Activated CD4-positive, alpha-beta T cell treated with anti-CD3 and anti-CD28 coated beads, Interleukin-2, amount 10 ng/mL, durations not matched to agents 24 days and 14 days (primary cell): ENCODE measurements at regions of chr2 and their contacts with region 1.

Region 1: GRCh38 chr2:112749755-112750559 is 14.5 kb downstream of the CKAP2L start:
- DNase-seq: peak; percentile 95
- H3K4me3 Mint-ChIP-seq: peak overlapping the region; percentile 55
- H3K27ac Mint-ChIP-seq: peak overlapping the region; percentile 83
- H3K4me1 Mint-ChIP-seq: peaks cover 34% of the 10 kb centered on the region
- H3K27me3 Mint-ChIP-seq: no peaks in the 10 kb centered on the region

Region 2: GRCh38 chr2:112648081-112648480 is 101.9 kb before region 1 on chr2:
- intact Hi-C with region 1: no loop called
- DNase-seq: no peak
- H3K4me3 Mint-ChIP-seq: peak overlapping the region; percentile 100
- H3K27ac Mint-ChIP-seq: no peak overlapping the region
- H3K4me1 Mint-ChIP-seq: peaks cover 66% of the 10 kb centered on the region
- H3K27me3 Mint-ChIP-seq: no peaks in the 10 kb centered on the region

Region 3: DNA sequence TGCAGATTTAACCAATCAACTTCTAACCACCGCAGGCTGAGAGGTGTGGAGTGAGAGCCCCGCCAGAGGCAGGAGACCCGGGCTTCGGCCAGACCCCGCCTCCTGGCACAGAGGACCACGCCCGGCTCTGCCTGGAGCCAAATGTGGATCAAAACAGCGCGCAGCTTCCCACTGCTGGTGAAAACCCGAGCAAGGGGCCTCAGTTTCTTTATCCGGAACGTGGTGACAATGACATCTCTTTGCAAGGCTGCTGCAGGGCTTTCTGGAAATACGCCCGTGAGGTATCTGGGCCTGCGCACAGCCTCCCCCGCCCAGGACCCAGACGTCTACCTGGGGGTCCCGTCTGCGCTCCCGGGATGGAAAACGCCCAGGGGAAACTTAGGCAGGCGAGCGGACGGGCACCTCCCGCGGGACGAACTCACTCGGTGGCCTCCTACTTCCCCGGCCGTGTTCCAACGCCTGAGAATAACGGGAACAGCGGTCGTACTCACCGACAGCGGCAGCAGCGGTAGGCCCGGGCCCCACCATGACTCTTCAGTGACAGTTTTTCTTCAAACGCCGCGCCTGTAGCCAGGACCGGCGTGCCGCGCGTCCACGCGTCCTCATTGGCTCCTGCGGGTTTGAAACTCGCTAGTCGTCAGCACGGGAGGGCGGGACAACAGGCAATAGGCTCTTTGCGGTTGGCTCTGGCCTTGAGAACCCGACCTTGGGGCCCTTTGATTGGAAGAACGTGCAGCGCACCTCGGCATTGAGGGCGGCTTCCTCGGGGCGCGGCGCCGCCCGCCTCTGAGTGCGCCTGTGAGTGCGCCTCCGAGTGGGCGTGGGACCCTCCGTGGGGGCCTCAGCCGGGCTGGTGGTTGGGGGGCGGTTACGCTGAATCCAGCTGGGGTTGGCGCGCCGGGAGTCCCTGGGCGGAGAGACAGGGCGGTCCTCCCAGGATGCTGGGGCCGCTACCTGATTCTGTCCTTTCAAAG is 14.4 kb after region 1 on chr2 and contains the start of gene CKAP2L:
- intact Hi-C with region 1: loop called (anchors 1 kb)
- DNase-seq: peak; percentile 99
- H3K4me3 Mint-ChIP-seq: peak within 1 kb of the TSS; percentile 92
- H3K27ac Mint-ChIP-seq: peak within 1 kb of the TSS; percentile 93
- H3K4me1 Mint-ChIP-seq: peaks cover 47% of the 10 kb centered on the region
- H3K27me3 Mint-ChIP-seq: no peaks in the 10 kb centered on the region
- total RNA-seq, gene CKAP2L: 17.8 and 17.9 TPM in 2 replicates

Region 4: DNA sequence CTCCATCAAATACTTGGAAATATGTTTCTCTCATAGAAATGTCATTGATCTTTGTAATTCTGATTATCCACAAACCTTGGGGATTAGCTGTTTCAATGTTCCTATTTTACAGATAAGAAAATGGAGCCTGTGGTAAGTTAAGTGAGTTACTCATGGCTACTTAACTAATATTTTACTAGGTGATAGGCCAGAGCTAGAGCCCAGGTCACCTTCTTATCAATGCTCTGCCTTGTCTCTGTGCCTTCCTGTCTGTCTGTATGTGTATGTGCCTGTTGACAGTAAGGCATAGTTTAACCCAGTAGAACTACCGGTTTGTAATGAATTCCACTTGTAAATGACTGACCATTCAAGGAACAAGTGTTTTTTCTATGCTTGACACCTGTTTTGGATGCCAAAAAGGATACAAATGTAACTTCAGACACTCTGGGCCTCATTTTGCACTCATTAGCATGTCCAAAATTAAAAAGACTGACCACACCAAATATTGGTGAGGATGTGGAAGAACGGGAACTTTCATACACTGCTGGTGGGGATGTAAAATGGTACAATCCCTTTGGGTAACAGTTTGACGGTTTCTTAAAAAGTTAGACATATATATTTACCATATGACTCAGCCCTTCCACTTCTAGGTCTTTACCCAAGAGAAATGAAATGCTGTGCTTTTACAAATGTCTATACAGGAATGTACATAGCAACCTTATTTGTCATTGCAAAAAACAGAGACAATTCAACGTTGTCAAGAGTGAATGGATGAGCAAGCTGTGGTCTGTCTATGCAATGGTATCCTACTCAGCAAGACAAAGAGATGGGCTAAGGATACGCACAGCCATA is 53.9 kb after region 1 on chr2:
- intact Hi-C with region 1: loop called (anchors 5 kb)
- DNase-seq: no peak
- H3K4me3 Mint-ChIP-seq: peak overlapping the region; percentile 50
- H3K27ac Mint-ChIP-seq: peak overlapping the region; percentile 94
- H3K4me1 Mint-ChIP-seq: peaks cover 40% of the 10 kb centered on the region
- H3K27me3 Mint-ChIP-seq: no peaks in the 10 kb centered on the region

Region 5: DNA sequence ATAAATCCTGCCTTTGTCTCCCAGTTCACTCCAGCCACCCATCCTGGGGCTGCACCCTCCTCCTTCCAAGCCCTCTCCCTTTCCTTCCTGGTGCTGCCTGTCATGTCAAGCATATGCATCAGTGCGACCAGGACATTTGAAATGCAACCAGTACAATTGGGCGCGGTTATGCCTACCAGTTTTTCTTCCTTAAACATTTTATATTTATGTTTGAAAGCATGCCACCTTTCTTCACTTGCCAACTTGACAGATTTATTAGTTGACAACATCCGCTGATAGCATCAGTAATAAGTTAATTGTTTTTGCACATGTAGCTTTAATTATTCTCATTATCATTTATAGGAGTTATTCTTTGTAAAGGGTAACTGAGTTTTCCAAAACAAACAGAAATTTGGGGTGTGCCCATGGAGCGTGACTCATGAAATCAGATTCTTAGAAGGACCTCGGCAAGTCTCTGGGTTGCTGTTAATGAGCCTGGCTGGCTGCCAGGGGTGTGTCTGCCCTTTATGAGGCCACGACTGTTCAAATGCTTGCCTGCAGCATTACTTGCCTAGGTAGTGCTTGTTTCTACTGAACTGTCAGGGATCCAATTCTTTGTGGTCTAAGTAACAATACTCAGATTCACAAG is 119.4 kb after region 1 on chr2:
- intact Hi-C with region 1: no loop called
- DNase-seq: no peak
- H3K4me3 Mint-ChIP-seq: no peak overlapping the region
- H3K27ac Mint-ChIP-seq: no peak overlapping the region
- H3K4me1 Mint-ChIP-seq: peaks cover 6% of the 10 kb centered on the region
- H3K27me3 Mint-ChIP-seq: peaks cover 45% of the 10 kb centered on the region

Region 6: GRCh38 chr2:112884869-112885505 is 135.0 kb after region 1 on chr2:
- intact Hi-C with region 1: loop called (anchors 1 kb)
- DNase-seq: peak; percentile 94
- H3K4me3 Mint-ChIP-seq: peak overlapping the region; percentile 22
- H3K27ac Mint-ChIP-seq: peak overlapping the region; percentile 21
- H3K4me1 Mint-ChIP-seq: peaks cover 26% of the 10 kb centered on the region
- H3K27me3 Mint-ChIP-seq: no peaks in the 10 kb centered on the region

Region 7: DNA sequence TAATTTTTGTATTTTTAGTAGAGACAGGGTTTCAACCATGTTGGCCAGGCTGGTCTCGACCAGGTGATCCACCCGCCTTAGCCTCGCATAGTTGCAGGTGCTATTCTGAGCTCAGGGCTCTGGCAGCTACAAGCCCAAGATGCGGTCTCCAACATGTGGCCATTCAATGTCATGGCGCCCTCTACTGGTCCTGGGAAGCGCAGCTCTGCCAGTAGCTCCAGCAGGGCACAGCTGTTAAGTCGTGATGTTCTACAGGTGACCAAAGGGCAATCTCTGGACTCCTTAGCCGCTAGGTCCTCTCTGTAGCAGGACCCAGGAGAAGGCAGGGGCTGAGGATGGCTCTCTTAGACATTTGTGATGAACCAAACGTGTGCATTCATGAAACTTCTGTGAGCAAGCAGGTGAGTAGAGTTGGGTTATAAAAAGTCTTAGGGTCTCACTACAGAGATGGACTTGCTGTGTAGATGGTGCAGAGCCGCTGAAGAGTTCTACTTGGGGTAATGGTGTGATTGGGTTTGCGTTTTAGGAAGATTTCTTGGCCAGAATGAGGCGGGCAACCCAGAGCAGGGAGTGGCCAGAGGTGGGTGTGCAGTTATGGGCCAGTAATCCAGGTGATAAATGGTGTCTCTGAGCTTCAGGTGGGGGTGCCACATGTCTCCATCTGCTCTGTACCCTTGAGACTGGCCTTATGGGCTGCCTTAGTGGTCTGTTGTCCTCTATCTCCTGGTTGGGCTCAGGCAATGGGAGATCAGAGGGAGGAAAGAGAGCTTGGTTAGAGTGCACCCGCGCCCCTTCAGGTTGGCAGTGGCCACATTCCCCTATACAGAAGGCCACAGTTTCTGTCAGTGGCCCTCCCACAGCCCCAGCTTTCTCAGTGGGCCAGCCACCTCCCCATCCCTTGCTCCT is 192.0 kb after region 1 on chr2:
- intact Hi-C with region 1: loop called (anchors 1 kb)
- DNase-seq: peak; percentile 93
- H3K4me3 Mint-ChIP-seq: no peak overlapping the region
- H3K27ac Mint-ChIP-seq: peak overlapping the region; percentile 25
- H3K4me1 Mint-ChIP-seq: peaks cover 6% of the 10 kb centered on the region
- H3K27me3 Mint-ChIP-seq: peaks cover 17% of the 10 kb centered on the region

Region 8: DNA sequence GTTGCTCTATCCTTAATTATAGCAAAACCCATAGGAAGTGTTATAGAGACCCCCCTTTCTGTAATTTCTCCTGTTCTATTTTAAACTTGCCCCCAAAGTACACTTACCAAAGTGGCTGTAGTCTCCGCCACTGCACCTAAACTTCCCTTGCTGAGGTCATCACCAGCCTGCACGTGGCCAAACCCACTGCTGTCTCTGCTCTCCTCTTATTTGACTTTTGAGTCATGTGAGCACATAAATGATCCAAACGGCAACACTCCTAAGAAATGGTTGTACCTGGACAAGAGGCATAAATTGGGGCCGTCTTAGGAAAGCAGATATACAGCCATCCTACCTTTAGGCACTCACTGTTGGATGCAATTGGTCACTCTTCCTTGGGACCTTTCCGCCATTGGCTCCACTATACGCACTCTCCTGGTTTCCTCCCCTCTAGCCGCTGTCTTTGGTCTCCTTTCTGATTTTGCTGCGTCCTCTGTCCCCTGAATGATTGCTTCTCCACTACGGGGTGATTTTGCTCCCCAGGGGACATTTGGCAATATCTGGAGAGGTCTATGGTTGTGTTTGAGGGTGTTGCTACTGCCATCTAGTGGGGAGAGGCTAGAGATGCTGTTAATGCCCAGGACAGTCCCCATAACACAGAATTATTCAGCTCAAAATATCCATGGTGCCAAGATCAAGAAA is 208.6 kb after region 1 on chr2:
- intact Hi-C with region 1: loop called (anchors 1 kb)
- DNase-seq: peak; percentile 80
- H3K4me3 Mint-ChIP-seq: no peak overlapping the region
- H3K27ac Mint-ChIP-seq: no peak overlapping the region
- H3K4me1 Mint-ChIP-seq: peaks cover 3% of the 10 kb centered on the region
- H3K27me3 Mint-ChIP-seq: peaks cover 12% of the 10 kb centered on the region